Psoas muscle (tissue), 8 donors: ENCODE measurements at regions of chrX and their contacts with region 1.

Region 1: GRCh38 chrX:38803586-38804431 is 2.5 kb downstream of the MID1IP1 start:
- DNase-seq: peak; percentile 88 to 94
- ATAC-seq: peak; percentile 75 to 82 (median 78)
- H3K4me3 ChIP-seq: peak overlapping the region; percentile 69
- H3K27ac ChIP-seq: peak overlapping the region; percentile 90
- H3K4me1 ChIP-seq: no peaks in the 10 kb centered on the region
- H3K27me3 ChIP-seq: no peaks in the 10 kb centered on the region
- CTCF ChIP-seq: no peak

Region 2: GRCh38 chrX:38754102-38754790 is 49.6 kb before region 1 on chrX:
- intact Hi-C with region 1: no loop called
- DNase-seq: no peak
- ATAC-seq: peak in 3 of 4 donors; percentile 61 to 85 (median 68)
- H3K4me3 ChIP-seq: no peak overlapping the region
- H3K27ac ChIP-seq: no peak overlapping the region
- H3K4me1 ChIP-seq: no peaks in the 10 kb centered on the region
- H3K27me3 ChIP-seq: peaks cover 0 to 8% (median 0%) of the 10 kb centered on the region in 3 donors
- CTCF ChIP-seq: peak; percentile 65

Region 3: GRCh38 chrX:38850807-38851544 is 47.2 kb after region 1 on chrX:
- intact Hi-C with region 1: loop called (anchors 5 kb)
- DNase-seq: no peak
- ATAC-seq: peak; percentile 66 to 85 (median 82)
- H3K4me3 ChIP-seq: no peak overlapping the region
- H3K27ac ChIP-seq: peak overlapping the region; percentile 69
- H3K4me1 ChIP-seq: peaks cover 3% of the 10 kb centered on the region
- H3K27me3 ChIP-seq: peaks cover 0 to 3% (median 0%) of the 10 kb centered on the region in 3 donors
- CTCF ChIP-seq: no peak

Region 4: DNA sequence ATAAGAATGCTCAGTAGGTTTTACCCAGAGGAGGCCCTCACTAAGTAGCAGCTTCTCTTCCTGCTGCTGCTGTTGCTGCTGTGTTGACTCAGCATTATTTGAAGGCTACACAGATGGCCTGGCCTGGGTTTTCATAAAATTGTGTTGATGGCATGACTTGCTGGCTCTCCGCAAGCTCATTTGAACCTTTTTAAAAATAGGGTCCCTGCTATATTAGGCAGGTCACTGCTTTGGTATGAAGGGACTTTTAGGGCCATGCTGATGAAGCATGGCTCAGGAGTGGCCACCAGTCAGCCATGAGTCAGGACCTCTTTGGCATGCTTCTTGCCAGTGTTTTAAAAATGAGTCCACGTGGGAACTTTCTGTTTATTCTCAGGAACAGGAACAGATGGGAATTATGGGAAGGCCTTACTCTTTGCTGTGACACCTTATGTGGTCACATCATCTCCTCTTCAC is 126.2 kb after region 1 on chrX:
- intact Hi-C with region 1: loop called in 1 of 2 experiments (anchors 5 kb)
- DNase-seq: peak; percentile 19 to 55
- ATAC-seq: peak; percentile 95 to 98 (median 96)
- H3K4me3 ChIP-seq: no peak overlapping the region
- H3K27ac ChIP-seq: peak overlapping the region; percentile 78
- H3K4me1 ChIP-seq: no peaks in the 10 kb centered on the region
- H3K27me3 ChIP-seq: peaks cover 0 to 8% (median 0%) of the 10 kb centered on the region in 3 donors
- CTCF ChIP-seq: no peak

Region 5: DNA sequence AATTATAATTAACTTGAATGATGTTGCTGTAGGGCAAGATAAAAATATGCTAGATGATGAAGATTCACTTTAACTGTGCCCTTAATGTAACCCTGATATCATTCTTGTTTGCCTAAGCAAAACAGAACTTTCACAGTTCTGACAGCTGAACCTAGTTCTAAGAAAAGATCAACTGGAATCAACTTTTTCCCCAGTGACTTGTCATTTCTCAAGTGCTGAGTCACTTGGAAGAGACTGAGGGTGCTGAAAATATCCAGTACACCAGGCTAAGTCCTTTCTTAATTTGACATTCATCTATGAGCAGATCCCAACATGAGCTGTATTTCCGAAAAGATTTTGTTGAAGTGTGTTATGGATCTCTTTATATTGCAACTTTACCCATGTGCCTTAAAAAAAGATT is 137.9 kb after region 1 on chrX:
- intact Hi-C with region 1: loop called in 1 of 2 experiments (anchors 10 kb)
- DNase-seq: no peak
- ATAC-seq: peak; percentile 76 to 86 (median 80)
- H3K4me3 ChIP-seq: no peak overlapping the region
- H3K27ac ChIP-seq: peak overlapping the region; percentile 75
- H3K4me1 ChIP-seq: peaks cover 6% of the 10 kb centered on the region
- H3K27me3 ChIP-seq: no peaks in the 10 kb centered on the region
- CTCF ChIP-seq: no peak

Region 6: GRCh38 chrX:38985375-38985774 is 181.6 kb after region 1 on chrX:
- intact Hi-C with region 1: loop called in 1 of 2 experiments (anchors 5 kb)
- DNase-seq: no peak
- ATAC-seq: peak in 2 of 4 donors; percentile 59 to 60
- H3K4me3 ChIP-seq: no peak overlapping the region
- H3K27ac ChIP-seq: no peak overlapping the region
- H3K4me1 ChIP-seq: no peaks in the 10 kb centered on the region
- H3K27me3 ChIP-seq: peaks cover 0 to 5% (median 0%) of the 10 kb centered on the region in 3 donors
- CTCF ChIP-seq: peak; percentile 21